ENCODE measurements at regions of chr9 and their contacts with region 1.

Region 1: DNA sequence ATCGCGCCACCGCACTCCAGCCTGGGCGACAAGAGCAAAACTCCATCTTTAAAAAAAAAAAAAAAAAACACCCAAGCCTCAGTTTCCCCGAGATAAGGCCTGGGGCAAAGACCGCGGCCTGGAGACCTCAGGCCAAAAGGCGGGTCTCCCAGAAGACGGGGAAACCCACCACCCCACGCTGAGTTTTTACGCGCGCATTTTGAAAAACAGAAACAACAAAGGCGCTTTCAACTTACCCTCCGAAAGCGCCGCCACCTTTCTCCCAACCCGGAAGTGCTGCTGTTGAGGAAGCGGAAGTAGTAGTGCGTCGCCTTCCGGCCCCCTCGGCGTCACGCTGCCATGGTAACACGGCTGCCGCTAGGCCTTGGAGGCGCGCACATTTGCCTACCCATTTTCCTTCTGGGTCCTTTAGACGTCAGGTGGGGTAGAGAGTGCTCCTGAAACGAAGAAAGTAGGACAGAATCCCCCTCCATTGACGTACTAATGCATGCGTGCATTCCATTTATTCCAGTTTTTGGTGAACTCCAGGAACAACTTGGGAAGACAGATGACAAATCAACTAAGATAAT is at the start of gene TTF1:
- DNase-seq: peak; percentile 91 to 96 (median 94)
- H3K4me3 ChIP-seq: peak within 1 kb of the TSS; percentile 57 to 77
- H3K4me3 Mint-ChIP-seq: peak within 1 kb of the TSS; percentile 92 to 96 (median 94)
- H3K27ac ChIP-seq: peak within 1 kb of the TSS; percentile 59
- H3K27ac Mint-ChIP-seq: peak within 1 kb of the TSS; percentile 87 to 98 (median 95)
- H3K4me1 ChIP-seq: peaks cover 58% of the 10 kb centered on the region
- H3K4me1 Mint-ChIP-seq: peaks cover 35 to 73% (median 47%) of the 10 kb centered on the region in 4 donors
- H3K27me3 ChIP-seq: peaks cover 4% of the 10 kb centered on the region
- H3K27me3 Mint-ChIP-seq: peaks cover 3 to 11% of the 10 kb centered on the region in 2 donors
- total RNA-seq, gene TTF1: 22.2 TPM

Region 2: DNA sequence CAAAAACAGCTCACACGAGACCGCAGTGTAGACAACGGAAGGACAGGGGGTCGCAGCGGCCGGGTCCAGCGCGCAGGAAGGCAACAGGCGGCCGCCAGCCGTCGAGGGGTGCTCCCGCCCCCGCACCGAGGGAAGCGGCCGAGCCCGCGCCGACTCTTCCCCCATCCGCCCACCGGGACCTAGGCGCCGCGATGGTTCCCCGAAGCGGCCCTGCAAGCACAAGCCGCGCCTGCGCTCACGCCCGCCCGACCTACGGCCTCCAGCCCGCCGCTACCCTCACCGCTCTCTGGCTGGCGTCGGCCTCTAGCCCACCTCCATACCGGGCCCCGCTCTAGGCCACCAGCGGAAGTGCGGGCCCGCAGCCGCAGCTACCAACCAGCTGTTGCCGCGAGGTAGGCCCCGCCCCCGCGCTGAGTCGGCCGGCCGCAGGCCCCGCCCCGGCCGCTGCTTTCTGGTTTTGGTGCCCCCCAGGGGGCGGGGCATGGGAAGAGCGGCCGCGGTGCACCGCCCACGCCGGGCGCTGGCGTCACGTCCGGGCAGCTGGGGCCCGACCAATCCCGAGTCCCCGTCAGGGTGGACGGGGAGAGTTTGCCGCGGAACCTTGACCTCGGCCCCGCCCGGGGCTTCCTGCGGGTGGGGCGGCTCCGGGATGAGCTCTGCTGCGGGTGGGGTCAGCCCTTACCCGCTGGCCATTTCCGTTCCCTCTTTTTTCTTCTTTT is 51.8 kb before region 1 on chr9 and contains the start of gene SETX:
- CTCF ChIA-PET with region 1: interaction called, 4 read pairs
- POLR2A ChIA-PET with region 1: interaction called, 13 read pairs
- intact Hi-C with region 1: loop called (anchors 1 kb)
- DNase-seq: peak; percentile 89 to 93 (median 91)
- H3K4me3 ChIP-seq: peak within 1 kb of the TSS; percentile 66 to 86
- H3K4me3 Mint-ChIP-seq: peak within 1 kb of the TSS; percentile 91 to 95 (median 93)
- H3K27ac ChIP-seq: peak within 1 kb of the TSS; percentile 95
- H3K27ac Mint-ChIP-seq: peak within 1 kb of the TSS; percentile 92 to 100 (median 96)
- H3K4me1 ChIP-seq: peaks cover 38% of the 10 kb centered on the region
- H3K4me1 Mint-ChIP-seq: peaks cover 30 to 53% (median 38%) of the 10 kb centered on the region in 4 donors
- H3K27me3 ChIP-seq: no peaks in the 10 kb centered on the region
- H3K27me3 Mint-ChIP-seq: no peaks in the 10 kb centered on the region
- total RNA-seq, gene SETX: 91.3 to 94.3 TPM

Region 3: DNA sequence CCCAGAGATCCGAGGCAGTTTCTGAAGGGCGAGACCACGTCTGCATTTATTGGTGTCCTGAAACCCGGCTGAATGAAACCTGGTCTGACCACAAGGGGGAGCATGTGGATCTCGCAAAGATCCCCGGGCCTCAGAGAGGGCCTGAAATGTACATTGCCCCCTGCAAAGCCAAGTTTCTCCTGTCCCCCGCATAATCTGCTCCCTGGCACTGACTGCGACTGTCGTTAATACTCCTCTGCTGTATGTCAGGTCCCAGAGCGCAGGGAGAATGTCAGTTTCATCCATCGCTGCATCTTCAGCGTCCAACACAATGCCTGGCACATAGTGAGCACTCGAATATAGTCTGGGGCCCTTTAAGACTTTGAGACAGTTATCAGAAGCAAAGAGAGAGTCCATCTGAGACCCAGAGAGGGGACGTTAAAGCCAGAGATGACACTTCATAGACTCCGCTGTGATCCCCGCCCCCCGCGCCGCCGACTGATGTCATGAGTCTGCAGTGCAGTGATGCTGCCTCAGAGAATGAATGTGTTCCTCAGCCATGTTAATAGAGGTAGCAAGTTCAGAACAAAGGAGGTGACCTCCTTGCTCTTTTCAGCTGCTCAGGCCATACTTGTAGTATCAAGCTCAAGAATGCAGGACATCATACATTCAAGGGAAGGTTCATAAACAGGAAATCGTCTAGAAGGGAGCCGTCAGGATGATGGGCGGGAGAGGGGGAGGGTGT is 101.3 kb after region 1 on chr9:
- CTCF ChIA-PET with region 1: no interaction called
- POLR2A ChIA-PET with region 1: no interaction called
- intact Hi-C with region 1: loop called (anchors 1 kb)
- DNase-seq: peak; percentile 46 to 59 (median 56)
- H3K4me3 ChIP-seq: no peak overlapping the region
- H3K4me3 Mint-ChIP-seq: peak overlapping the region in 4 of 8 donors; percentile 33 to 64 (median 57)
- H3K27ac ChIP-seq: no peak overlapping the region
- H3K27ac Mint-ChIP-seq: peak overlapping the region in 3 of 7 donors; percentile 36 to 64 (median 41)
- H3K4me1 ChIP-seq: peaks cover 21% of the 10 kb centered on the region
- H3K4me1 Mint-ChIP-seq: peaks cover 11 to 22% (median 18%) of the 10 kb centered on the region in 4 donors
- H3K27me3 ChIP-seq: peaks cover 4% of the 10 kb centered on the region
- H3K27me3 Mint-ChIP-seq: peaks cover 1 to 4% of the 10 kb centered on the region in 2 donors

Region 4: GRCh38 chr9:132651254-132651653 is 244.6 kb after region 1 on chr9:
- CTCF ChIA-PET with region 1: interaction called, 3 read pairs
- POLR2A ChIA-PET with region 1: no interaction called
- intact Hi-C with region 1: loop called (anchors 5 kb)
- DNase-seq: no peak
- H3K4me3 ChIP-seq: no peak overlapping the region
- H3K4me3 Mint-ChIP-seq: no peak overlapping the region
- H3K27ac ChIP-seq: no peak overlapping the region
- H3K27ac Mint-ChIP-seq: no peak overlapping the region
- H3K4me1 ChIP-seq: no peaks in the 10 kb centered on the region
- H3K4me1 Mint-ChIP-seq: peaks cover 0 to 6% (median 1%) of the 10 kb centered on the region in 4 donors
- H3K27me3 ChIP-seq: no peaks in the 10 kb centered on the region
- H3K27me3 Mint-ChIP-seq: no peaks in the 10 kb centered on the region

Region 5: DNA sequence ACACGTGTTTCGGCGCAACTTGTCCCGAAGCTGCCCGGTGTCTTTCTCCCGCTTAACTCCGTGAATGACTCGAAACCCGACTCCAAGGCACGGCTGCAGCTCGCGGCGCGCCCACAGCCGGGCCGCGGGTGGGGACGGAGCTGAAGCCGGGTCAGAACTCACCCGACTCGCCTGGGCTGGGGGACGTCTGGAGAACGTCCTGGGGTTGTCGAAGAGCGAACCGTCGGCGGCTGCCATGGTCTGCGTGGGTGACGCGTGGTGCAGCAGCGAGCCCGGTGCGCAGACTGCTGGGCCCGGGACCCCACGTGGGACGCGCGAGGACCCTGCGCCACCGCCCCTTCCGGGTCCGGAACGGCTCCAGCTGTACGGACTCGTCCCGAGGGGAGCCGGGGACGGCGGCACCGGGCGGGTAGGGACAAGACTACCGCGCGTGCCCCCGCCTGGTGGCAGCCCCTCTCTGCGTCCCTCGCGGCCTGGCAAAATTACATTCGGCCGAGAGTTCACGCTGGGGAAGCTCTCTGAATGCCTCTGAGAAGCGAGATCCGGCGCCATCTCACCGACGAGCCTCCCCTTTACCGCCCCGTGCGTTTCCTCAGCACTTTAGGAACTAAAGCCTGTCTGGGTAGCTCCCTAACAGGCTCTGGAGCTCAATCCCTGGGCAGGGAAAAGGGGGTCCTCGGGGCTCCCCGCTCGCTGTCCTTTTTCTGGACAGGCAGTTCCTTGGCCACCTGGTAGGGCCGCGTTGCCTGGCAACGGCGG is 263.2 kb after region 1 on chr9 and contains the start of gene DDX31:
- CTCF ChIA-PET with region 1: no interaction called
- POLR2A ChIA-PET with region 1: no interaction called
- intact Hi-C with region 1: loop called (anchors 1 kb)
- DNase-seq: peak; percentile 89 to 93 (median 89)
- H3K4me3 ChIP-seq: peak within 1 kb of the TSS; percentile 88 to 97
- H3K4me3 Mint-ChIP-seq: peak within 1 kb of the TSS; percentile 88 to 95 (median 90)
- H3K27ac ChIP-seq: peak within 1 kb of the TSS; percentile 99
- H3K27ac Mint-ChIP-seq: peak within 1 kb of the TSS; percentile 93 to 100 (median 96)
- H3K4me1 ChIP-seq: peaks cover 42% of the 10 kb centered on the region
- H3K4me1 Mint-ChIP-seq: peaks cover 36 to 61% (median 44%) of the 10 kb centered on the region in 4 donors
- H3K27me3 ChIP-seq: no peaks in the 10 kb centered on the region
- H3K27me3 Mint-ChIP-seq: no peaks in the 10 kb centered on the region
- total RNA-seq, gene DDX31: 19.6 to 21.1 TPM

Region 6: DNA sequence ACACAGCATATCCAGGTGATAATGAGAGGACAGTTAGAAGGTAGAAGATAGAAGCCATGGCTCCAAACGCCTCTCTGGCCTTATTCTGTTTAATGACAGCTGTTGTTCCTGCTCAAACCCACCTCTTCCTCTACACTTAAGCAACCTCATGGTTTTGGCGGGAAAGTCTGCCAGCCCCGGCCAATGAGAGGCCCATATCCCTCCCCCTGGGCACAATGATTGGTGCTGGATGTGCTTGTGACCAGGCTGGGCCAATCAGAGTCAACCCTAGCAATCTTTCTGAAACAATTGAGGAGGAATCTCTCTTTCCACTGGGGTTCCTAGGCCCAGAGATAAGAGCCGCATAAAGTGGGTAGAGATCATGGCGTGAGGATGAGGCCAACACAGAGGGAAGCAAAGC is 567.1 kb after region 1 on chr9:
- CTCF ChIA-PET with region 1: no interaction called
- POLR2A ChIA-PET with region 1: no interaction called
- intact Hi-C with region 1: loop called (anchors 5 kb)
- DNase-seq: peak in 1 of 5 donors; percentile 9
- H3K4me3 ChIP-seq: no peak overlapping the region
- H3K4me3 Mint-ChIP-seq: no peak overlapping the region
- H3K27ac ChIP-seq: no peak overlapping the region
- H3K27ac Mint-ChIP-seq: no peak overlapping the region
- H3K4me1 ChIP-seq: peaks cover 10% of the 10 kb centered on the region
- H3K4me1 Mint-ChIP-seq: peaks cover 4 to 11% (median 6%) of the 10 kb centered on the region in 4 donors
- H3K27me3 ChIP-seq: peaks cover 4% of the 10 kb centered on the region
- H3K27me3 Mint-ChIP-seq: peaks cover 15 to 25% of the 10 kb centered on the region in 2 donors